Caco-2 (cell line): ENCODE measurements at regions of chrX and their contacts with region 1.

Region 1: DNA sequence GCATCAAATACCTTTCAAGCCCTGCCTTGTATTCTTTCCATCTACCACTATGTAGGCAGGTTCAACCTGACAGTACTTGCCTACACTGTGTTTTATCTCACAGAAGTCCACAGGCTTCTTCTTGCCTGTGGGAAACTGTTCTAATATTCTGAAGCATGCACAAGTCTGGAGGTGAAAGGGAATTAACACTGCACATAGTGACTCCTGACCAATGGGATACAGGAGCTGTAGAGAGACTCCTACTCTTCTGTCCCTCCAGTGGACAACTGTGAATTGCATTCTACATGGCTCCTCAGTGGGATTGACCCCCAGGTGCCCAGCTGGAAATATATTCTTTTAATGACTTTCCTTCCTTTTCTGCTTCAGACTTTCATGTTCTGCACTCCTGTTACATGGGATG is 8.3 kb upstream of the YIPF6 start:
- DNase-seq: peak in 1 of 2 experiments; percentile 39
- H3K4me3 ChIP-seq: no peak overlapping the region
- H3K4me3 Mint-ChIP-seq: no peak overlapping the region
- H3K27ac Mint-ChIP-seq: no peak overlapping the region
- H3K4me1 ChIP-seq: peaks cover 19% of the 10 kb centered on the region
- H3K4me1 Mint-ChIP-seq: peaks cover 6% of the 10 kb centered on the region
- H3K27me3 ChIP-seq: no peaks in the 10 kb centered on the region
- H3K27me3 Mint-ChIP-seq: no peaks in the 10 kb centered on the region
- CTCF ChIP-seq: peak in 1 of 2 experiments; percentile 55

Region 2: DNA sequence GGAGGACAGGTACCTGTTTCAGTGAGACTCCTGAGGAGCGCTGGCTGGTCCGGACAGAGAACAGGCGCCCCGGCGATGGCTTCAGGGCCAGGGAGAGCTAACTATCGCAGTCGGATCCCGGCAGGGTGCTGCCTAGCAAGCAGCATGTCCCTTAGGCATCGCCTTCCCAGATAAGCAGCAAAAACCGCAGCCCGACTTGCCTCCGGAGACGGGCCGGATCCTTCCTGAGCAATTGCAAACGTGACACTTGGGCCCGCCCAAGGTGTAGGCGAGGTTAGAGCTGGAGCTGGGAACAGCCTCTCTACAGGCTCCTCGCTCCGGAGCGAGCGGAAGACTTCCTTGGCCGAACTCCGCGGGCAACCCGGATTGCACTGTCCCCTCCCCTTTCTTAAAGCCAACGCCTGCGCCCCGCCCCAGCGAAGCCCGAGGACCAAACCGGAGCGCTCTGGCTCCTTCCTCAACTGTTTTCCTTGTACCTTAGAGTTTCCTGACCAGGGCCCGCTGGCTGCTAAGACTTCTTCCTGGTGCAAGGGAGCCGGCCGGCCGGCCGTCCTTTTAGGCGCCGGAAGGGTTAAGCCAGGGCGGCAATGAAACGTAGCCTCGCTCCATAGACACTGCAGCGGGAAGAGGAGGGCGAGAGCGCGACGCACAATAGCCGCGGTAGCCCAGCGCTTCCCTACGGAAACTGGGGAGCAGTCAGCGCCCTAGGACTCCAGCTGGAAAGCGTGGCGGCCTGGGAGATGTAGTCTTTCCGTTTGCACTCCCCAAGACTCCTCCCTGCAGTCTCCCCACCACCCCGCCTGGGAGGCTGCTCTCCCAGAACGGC is 57.2 kb before region 1 on chrX and contains the start of gene OPHN1:
- CTCF ChIA-PET with region 1: no interaction called
- POLR2A ChIA-PET with region 1: no interaction called
- intact Hi-C with region 1: loop called (anchors 1 kb)
- DNase-seq: peak; percentile 76 to 78
- H3K4me3 ChIP-seq: peak within 1 kb of the TSS; percentile 69
- H3K4me3 Mint-ChIP-seq: peak within 1 kb of the TSS; percentile 83
- H3K27ac Mint-ChIP-seq: peak within 1 kb of the TSS; percentile 50
- H3K4me1 ChIP-seq: no peaks in the 10 kb centered on the region
- H3K4me1 Mint-ChIP-seq: peaks cover 13% of the 10 kb centered on the region
- H3K27me3 ChIP-seq: no peaks in the 10 kb centered on the region
- H3K27me3 Mint-ChIP-seq: no peaks in the 10 kb centered on the region
- CTCF ChIP-seq: no peak
- total RNA-seq, gene OPHN1: 2.8 and 4.6 TPM in 2 replicates